ENCODE measurements at regions of chr5 and their contacts with region 1.

Region 1: DNA sequence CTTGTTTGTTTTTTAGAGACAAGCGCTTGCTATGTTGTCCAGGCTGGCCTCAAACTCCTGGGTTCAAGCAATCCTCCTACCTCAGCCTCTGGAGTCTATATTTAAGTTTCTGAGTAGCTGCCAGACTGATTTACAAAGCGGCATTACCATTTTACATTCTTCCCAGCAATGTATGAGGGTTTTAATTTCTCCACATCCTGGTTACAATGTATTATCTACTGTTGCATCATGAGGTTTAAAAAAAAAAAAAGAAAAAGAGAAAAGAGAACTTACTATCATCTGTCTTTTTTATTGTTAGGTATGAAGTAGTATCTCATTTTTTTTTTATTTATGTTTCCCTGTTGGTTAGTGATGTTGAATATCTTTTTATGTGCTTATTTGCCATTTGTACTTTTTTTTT is 18.9 kb upstream of the CLINT1 start:
- DNase-seq: no peak
- H3K4me3 Mint-ChIP-seq: no peak overlapping the region
- H3K27ac Mint-ChIP-seq: no peak overlapping the region
- H3K4me1 Mint-ChIP-seq: no peaks in the 10 kb centered on the region
- H3K27me3 Mint-ChIP-seq: no peaks in the 10 kb centered on the region
- CTCF ChIP-seq: no peak

Region 2: DNA sequence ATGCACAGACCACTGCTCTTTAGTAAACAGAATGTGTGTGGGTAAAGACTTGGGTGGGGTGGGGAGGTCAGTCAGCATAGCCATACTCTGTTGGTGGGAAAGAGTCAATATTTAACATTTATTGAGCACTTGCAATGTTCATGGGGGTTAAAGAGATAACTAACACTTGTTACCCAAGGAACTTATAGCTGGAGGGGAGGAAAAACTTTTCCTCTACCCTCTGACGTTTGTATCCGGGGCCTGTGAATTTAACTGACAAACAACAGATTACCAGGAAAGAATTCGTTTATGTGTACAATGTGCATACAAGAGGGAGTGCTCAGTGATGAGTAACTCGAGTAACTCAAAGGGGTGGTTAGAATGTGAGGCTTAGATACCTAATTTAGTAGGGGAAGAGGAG is 12.0 kb before region 1 on chr5:
- CTCF ChIA-PET with region 1: interaction called, 6 read pairs
- intact Hi-C with region 1: loop called (anchors 1 kb)
- DNase-seq: no peak
- H3K4me3 Mint-ChIP-seq: no peak overlapping the region
- H3K27ac Mint-ChIP-seq: no peak overlapping the region
- H3K4me1 Mint-ChIP-seq: peaks cover 28% of the 10 kb centered on the region
- H3K27me3 Mint-ChIP-seq: no peaks in the 10 kb centered on the region
- CTCF ChIP-seq: no peak

Region 3: GRCh38 chr5:157900644-157901043 is 22.8 kb after region 1 on chr5:
- CTCF ChIA-PET with region 1: interaction called, 11 read pairs
- intact Hi-C with region 1: no loop called
- DNase-seq: no peak
- H3K4me3 Mint-ChIP-seq: no peak overlapping the region
- H3K27ac Mint-ChIP-seq: no peak overlapping the region
- H3K4me1 Mint-ChIP-seq: peaks cover 9% of the 10 kb centered on the region
- H3K27me3 Mint-ChIP-seq: no peaks in the 10 kb centered on the region
- CTCF ChIP-seq: no peak